ENCODE measurements at regions of chr2 and their contacts with region 1.

Region 1: DNA sequence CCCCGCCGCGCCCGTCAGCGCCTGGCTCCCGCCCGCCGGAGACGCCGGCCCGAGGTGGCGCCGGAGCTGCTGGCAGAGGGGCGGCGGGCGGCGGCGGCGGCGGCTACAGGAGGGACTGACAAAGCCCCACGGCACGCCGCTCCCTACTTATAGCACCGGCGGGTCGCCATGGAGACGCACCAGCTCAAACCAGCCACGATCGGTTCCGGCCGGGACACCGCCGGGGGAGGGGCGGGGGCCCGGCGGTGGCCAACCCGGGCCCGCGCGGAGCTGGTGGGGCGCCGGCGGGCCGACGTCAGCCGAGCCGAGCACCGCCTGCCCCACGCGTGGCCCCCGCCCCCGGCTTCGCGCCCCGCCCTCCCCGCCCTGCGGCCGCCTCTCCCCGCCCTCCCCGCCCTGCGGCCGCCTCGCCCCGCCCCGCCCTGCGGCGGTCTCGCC is at the start of gene ODC1:
- DNase-seq: peak; percentile 96 to 100 (median 98)
- ATAC-seq: peak; percentile 81
- H3K4me3 ChIP-seq: peak within 1 kb of the TSS; percentile 61 to 83
- H3K4me3 Mint-ChIP-seq: peak within 1 kb of the TSS; percentile 85
- H3K27ac ChIP-seq: peak within 1 kb of the TSS; percentile 87 to 97
- H3K27ac Mint-ChIP-seq: peak within 1 kb of the TSS; percentile 88
- H3K4me1 ChIP-seq: peaks cover 23% of the 10 kb centered on the region
- H3K4me1 Mint-ChIP-seq: peaks cover 39% of the 10 kb centered on the region
- H3K27me3 ChIP-seq: no peaks in the 10 kb centered on the region
- H3K27me3 Mint-ChIP-seq: no peaks in the 10 kb centered on the region
- CTCF ChIP-seq: no peak
- total RNA-seq, gene ODC1: 157 to 162 TPM

Region 2: DNA sequence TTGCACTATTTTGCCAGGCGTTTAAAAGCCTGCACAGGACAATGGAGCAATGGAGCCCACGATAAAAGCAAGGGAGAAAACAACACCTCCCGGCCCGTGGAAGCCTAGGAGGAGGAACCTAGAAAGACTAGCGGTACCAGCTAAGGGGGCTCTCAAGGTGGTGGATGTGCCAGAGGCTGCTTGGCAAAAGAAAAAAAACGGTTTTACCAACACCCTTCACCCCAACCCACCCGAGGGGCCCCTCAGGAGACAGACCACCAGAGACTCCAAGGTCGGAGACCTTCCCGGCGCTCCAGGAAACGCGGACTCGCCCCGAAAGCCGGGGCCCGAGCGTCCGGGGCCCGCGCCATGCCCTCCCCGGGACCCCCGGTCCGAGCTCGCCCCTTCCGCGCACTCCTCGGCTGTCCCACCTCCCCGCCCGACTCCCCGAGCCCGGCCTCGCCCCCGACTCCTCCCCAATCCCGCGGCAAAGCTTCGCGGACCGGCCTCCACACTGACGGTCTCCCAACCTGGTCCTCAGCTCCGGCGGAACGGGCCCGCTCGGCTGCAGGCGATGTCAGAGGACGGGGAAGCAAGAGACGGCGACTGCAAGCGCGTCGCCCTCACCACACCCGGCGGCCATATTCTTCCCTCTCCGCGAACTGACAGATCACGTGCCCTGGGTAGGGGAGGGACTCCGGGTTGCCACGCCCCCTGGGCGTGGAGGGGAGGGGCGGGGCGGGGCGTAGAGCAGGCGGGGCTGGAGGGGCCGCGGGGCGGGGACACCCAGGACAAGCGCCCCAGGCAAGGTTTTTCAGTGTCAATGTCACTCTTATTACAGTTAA is 1611.0 kb before region 1 on chr2 and contains the start of gene KIDINS220:
- CTCF ChIA-PET with region 1: no interaction called
- POLR2A ChIA-PET with region 1: no interaction called
- intact Hi-C with region 1: loop called in 1 of 2 experiments (anchors 5 kb)
- DNase-seq: peak; percentile 74 to 92 (median 85)
- ATAC-seq: peak; percentile 96
- H3K4me3 ChIP-seq: peak within 1 kb of the TSS; percentile 76 to 96
- H3K4me3 Mint-ChIP-seq: peak within 1 kb of the TSS; percentile 100
- H3K27ac ChIP-seq: peak within 1 kb of the TSS; percentile 62 to 81
- H3K27ac Mint-ChIP-seq: peak within 1 kb of the TSS; percentile 99
- H3K4me1 ChIP-seq: peaks cover 49% of the 10 kb centered on the region
- H3K4me1 Mint-ChIP-seq: peaks cover 55% of the 10 kb centered on the region
- H3K27me3 ChIP-seq: peaks cover 0 to 2% of the 10 kb centered on the region in 2 experiments
- H3K27me3 Mint-ChIP-seq: no peaks in the 10 kb centered on the region
- CTCF ChIP-seq: no peak
- total RNA-seq, gene KIDINS220: 26.2 to 28.8 TPM

Region 3: DNA sequence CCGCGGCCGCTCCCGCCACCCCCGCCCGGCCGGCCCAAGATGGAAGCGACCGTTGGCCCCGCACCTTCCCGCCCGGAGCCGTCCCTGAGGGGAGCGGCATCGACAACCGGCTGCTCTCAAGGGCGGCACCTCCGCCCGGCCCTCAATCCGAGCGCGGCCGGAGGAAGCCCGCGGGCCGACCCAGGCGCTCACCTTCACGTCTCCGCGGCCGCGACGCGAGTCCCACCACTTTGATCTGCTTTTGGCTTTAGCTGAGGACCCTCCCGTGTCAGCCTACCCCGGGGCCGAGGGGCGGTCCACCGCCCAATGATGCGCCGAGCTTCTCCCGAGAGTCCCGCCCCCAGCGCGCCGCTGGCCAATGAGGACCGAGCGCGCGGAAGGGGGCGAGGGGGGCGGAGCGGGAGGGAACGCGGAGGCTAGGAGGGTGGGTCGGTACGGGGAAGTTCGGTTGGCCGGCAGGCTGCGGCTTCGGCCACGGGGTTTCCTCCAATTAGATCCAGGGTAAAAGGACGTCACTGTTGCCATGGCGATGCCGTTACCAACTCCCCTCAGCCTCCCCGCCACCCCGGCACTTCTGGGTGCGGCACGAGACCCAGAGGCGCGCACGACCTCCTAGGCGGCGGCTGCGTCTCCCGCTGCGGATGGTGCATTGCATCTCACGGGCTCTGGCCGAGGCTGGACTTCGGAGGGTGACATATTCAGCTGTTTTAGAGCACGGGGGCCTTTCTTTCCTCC is 817.3 kb before region 1 on chr2 and contains the start of gene YWHAQ:
- CTCF ChIA-PET with region 1: no interaction called
- POLR2A ChIA-PET with region 1: no interaction called
- intact Hi-C with region 1: loop called (anchors 2 to 5 kb)
- DNase-seq: peak; percentile 95 to 100 (median 97)
- ATAC-seq: peak; percentile 90
- H3K4me3 ChIP-seq: peak within 1 kb of the TSS; percentile 90 to 93
- H3K4me3 Mint-ChIP-seq: peak within 1 kb of the TSS; percentile 93
- H3K27ac ChIP-seq: peak within 1 kb of the TSS; percentile 89 to 91
- H3K27ac Mint-ChIP-seq: peak within 1 kb of the TSS; percentile 94
- H3K4me1 ChIP-seq: peaks cover 37% of the 10 kb centered on the region
- H3K4me1 Mint-ChIP-seq: peaks cover 46% of the 10 kb centered on the region
- H3K27me3 ChIP-seq: no peaks in the 10 kb centered on the region
- H3K27me3 Mint-ChIP-seq: no peaks in the 10 kb centered on the region
- CTCF ChIP-seq: no peak
- total RNA-seq, gene YWHAQ: 115 to 123 TPM

Region 4: DNA sequence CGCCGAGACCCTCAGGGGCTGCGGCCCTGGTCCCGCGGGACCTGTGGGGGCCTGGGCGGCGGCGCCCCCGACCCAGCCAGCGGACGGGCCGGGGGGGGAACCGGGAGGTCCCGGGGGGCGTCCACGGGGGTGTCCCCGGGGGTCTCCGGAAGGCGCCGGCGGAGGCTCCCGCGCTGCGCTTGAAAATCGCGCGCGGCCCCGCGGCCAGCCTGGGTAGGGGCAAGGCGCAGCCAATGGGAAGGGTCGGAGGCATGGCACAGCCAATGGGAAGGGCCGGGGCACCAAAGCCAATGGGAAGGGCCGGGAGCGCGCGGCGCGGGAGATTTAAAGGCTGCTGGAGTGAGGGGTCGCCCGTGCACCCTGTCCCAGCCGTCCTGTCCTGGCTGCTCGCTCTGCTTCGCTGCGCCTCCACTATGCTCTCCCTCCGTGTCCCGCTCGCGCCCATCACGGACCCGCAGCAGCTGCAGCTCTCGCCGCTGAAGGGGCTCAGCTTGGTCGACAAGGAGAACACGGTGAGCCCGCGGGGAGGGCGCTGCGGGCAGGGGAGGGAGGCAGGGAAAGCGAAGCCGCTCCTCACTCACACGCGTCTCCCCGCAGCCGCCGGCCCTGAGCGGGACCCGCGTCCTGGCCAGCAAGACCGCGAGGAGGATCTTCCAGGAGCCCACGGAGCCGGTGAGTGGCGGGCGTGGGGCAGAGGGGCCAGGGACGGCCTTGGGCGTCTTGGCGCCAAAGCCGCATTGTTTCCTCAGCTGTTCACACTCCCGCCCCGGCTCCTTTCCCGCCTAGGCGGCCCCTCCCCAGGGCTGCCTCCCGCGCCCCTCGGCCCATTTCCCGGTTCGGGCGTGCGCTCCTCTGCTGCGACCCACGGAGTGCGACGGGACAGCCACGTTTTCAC is 325.6 kb before region 1 on chr2 and contains the start of gene RRM2:
- CTCF ChIA-PET with region 1: interaction called, 11 read pairs
- POLR2A ChIA-PET with region 1: interaction called, 4 read pairs
- intact Hi-C with region 1: no loop called
- DNase-seq: peak; percentile 75 to 93 (median 87)
- ATAC-seq: peak; percentile 75
- H3K4me3 ChIP-seq: peak within 1 kb of the TSS; percentile 49 to 60
- H3K4me3 Mint-ChIP-seq: peak within 1 kb of the TSS; percentile 96
- H3K27ac ChIP-seq: no peak within 1 kb of the TSS
- H3K27ac Mint-ChIP-seq: no peak within 1 kb of the TSS
- H3K4me1 ChIP-seq: peaks cover 33% of the 10 kb centered on the region
- H3K4me1 Mint-ChIP-seq: peaks cover 44% of the 10 kb centered on the region
- H3K27me3 ChIP-seq: peaks cover 13 to 17% of the 10 kb centered on the region in 2 experiments
- H3K27me3 Mint-ChIP-seq: peaks cover 19% of the 10 kb centered on the region
- CTCF ChIP-seq: no peak
- total RNA-seq, gene RRM2: 1.6 to 2.1 TPM

Region 5: GRCh38 chr2:10493636-10494281 is 45.5 kb after region 1 on chr2:
- CTCF ChIA-PET with region 1: interaction called, 4 read pairs
- POLR2A ChIA-PET with region 1: interaction called, 14 read pairs
- intact Hi-C with region 1: loop called (anchors 1 kb)
- DNase-seq: peak; percentile 58 to 91 (median 83)
- ATAC-seq: peak; percentile 88
- H3K4me3 ChIP-seq: peak overlapping the region in 1 of 2 experiments; percentile 18
- H3K4me3 Mint-ChIP-seq: peak overlapping the region; percentile 43
- H3K27ac ChIP-seq: peak overlapping the region in 1 of 2 experiments; percentile 42
- H3K27ac Mint-ChIP-seq: peak overlapping the region; percentile 82
- H3K4me1 ChIP-seq: peaks cover 26% of the 10 kb centered on the region
- H3K4me1 Mint-ChIP-seq: peaks cover 28% of the 10 kb centered on the region
- H3K27me3 ChIP-seq: no peaks in the 10 kb centered on the region
- H3K27me3 Mint-ChIP-seq: peaks cover 8% of the 10 kb centered on the region
- CTCF ChIP-seq: no peak

Region 6: GRCh38 chr2:10812362-10813162 is 364.3 kb after region 1 on chr2 and contains the start of gene PDIA6:
- CTCF ChIA-PET with region 1: no interaction called
- POLR2A ChIA-PET with region 1: no interaction called
- intact Hi-C with region 1: loop called (anchors 5 kb)
- DNase-seq: peak; percentile 89 to 96 (median 93)
- ATAC-seq: peak; percentile 90
- H3K4me3 ChIP-seq: peak within 1 kb of the TSS; percentile 65 to 84
- H3K4me3 Mint-ChIP-seq: peak within 1 kb of the TSS; percentile 91
- H3K27ac ChIP-seq: peak within 1 kb of the TSS; percentile 56 to 73
- H3K27ac Mint-ChIP-seq: peak within 1 kb of the TSS; percentile 86
- H3K4me1 ChIP-seq: peaks cover 27% of the 10 kb centered on the region
- H3K4me1 Mint-ChIP-seq: peaks cover 41% of the 10 kb centered on the region
- H3K27me3 ChIP-seq: no peaks in the 10 kb centered on the region
- H3K27me3 Mint-ChIP-seq: peaks cover 1% of the 10 kb centered on the region
- CTCF ChIP-seq: no peak
- total RNA-seq, gene PDIA6: 24.4 to 24.8 TPM

Measured in CD8-positive, alpha-beta T cell (primary cell).